AG04450 (cell line): ENCODE measurements at regions of chr7 and their contacts with region 1.

Region 1: GRCh38 chr7:128209229-128210035 is 31.6 kb upstream of the LEP start:
- DNase-seq: peak; percentile 44
- H3K4me3 ChIP-seq: no peak overlapping the region
- H3K27ac ChIP-seq: no peak overlapping the region
- H3K27me3 ChIP-seq: peaks cover 60% of the 10 kb centered on the region
- CTCF ChIP-seq: peak; percentile 99

Region 2: GRCh38 chr7:127588019-127588696 is 621.3 kb before region 1 on chr7 and contains the start of gene ARF5:
- CTCF ChIA-PET with region 1: interaction called, 17 read pairs
- POLR2A ChIA-PET with region 1: no interaction called
- DNase-seq: peak; percentile 33
- H3K4me3 ChIP-seq: peak within 1 kb of the TSS; percentile 92
- H3K27ac ChIP-seq: peak within 1 kb of the TSS; percentile 61
- H3K27me3 ChIP-seq: no peaks in the 10 kb centered on the region
- CTCF ChIP-seq: no peak
- polyA plus RNA-seq, gene ARF5: 174 and 179 TPM in 2 replicates

Region 3: DNA sequence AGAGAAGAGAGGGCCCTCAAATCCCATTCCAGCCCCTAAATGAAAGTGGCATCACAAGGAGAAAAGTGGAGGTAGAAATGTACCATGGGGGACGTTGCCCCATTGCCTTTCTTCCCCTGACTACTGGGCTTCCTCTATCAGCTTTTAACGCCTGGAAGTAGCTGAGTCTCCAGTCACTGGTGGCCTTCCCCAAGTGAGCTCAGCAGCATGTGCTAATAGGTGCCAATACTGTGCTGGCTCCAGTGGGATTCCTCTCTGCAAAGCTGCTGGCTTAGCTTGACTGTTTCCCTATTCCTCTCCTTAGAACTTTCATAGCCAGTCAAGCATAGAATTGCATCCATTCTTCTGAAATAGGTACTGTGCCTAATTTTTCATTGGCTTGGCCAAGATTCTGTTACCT is 210.8 kb before region 1 on chr7:
- CTCF ChIA-PET with region 1: interaction called, 11 read pairs
- POLR2A ChIA-PET with region 1: no interaction called
- DNase-seq: no peak
- H3K4me3 ChIP-seq: no peak overlapping the region
- H3K27ac ChIP-seq: no peak overlapping the region
- H3K27me3 ChIP-seq: no peaks in the 10 kb centered on the region
- CTCF ChIP-seq: no peak

Region 4: DNA sequence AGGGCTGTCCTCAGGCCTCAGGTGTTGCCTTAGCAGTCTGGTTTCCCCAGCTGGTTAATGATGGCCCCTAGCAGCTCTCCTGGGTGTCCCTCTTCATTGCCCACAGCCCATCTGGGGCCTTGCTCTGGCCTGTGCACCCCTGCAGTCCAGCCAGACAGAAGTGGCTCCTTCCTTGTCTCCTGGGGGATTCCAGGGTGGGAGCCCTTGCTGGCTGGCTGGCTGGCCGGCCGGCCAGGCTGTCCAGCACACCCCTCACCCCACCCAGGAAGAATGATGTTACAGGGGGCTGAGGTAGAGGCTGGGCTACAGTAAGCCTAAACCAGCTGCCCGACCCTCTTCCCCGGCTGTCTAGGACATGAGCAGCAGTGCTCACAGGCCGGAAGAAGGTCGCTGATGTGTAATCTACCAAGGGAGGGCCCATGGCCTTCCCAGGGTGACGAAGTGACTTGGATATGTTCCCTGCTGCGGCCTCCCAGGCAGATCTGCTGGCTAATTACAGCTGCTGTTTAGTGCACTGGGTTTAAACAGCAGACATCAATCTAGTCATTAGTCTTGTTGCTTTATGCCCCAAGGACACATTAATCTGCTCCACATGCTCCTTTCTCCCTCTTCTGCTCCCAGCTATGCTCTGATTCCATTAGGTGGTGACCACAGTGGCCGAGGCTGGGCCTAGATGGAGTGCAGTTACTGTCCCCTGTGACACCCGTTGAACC is 124.4 kb before region 1 on chr7:
- CTCF ChIA-PET with region 1: interaction called, 11 read pairs
- POLR2A ChIA-PET with region 1: no interaction called
- DNase-seq: no peak
- H3K4me3 ChIP-seq: no peak overlapping the region
- H3K27ac ChIP-seq: no peak overlapping the region
- H3K27me3 ChIP-seq: no peaks in the 10 kb centered on the region
- CTCF ChIP-seq: no peak

Region 5: DNA sequence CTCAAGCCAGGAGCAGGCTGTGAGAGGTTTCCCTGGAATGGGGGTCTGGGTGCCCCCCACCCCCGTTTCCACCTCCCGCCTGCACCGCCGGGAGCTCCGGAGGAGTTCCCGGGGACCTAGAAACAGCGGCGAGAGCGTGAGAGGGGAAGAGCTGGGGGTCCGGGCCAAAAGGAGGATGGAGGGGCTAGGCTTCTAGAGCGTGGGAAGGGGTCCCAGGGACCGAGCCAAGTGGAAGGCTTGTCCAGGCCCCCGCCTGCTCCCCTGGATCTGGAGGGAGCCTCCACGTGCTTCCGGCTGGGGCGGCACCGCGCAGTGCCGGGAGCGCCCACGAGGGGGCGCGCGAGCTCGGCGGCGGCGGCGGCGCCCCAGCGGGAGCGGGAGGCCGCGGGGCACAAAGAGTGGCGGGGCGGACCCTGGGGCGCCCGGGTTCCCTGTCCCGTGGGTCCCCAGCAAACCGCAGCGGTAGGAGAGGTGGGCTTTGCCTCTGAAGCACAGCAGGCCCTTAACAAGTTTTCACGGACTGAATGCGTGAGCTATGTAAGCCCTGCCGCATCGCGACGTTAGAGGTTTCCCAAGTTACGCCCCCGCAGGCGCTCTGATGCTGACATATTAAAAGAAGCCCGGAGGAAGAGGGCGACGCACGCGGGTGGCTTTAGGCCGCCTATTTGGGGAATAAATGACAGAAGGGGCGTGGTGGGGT is 73.8 kb before region 1 on chr7:
- CTCF ChIA-PET with region 1: interaction called, 62 read pairs
- POLR2A ChIA-PET with region 1: no interaction called
- DNase-seq: no peak
- H3K4me3 ChIP-seq: peak overlapping the region; percentile 65
- H3K27ac ChIP-seq: no peak overlapping the region
- H3K27me3 ChIP-seq: peaks cover 66% of the 10 kb centered on the region
- CTCF ChIP-seq: peak; percentile 60

Region 6: GRCh38 chr7:128322040-128322643 is 112.7 kb after region 1 on chr7:
- CTCF ChIA-PET with region 1: interaction called, 11 read pairs
- POLR2A ChIA-PET with region 1: no interaction called
- DNase-seq: no peak
- H3K4me3 ChIP-seq: no peak overlapping the region
- H3K27ac ChIP-seq: no peak overlapping the region
- H3K27me3 ChIP-seq: no peaks in the 10 kb centered on the region
- CTCF ChIP-seq: peak; percentile 51